ENCODE measurements at regions of chrX and their contacts with region 1.

Region 1: GRCh38 chrX:34227804-34228203 is 95.7 kb upstream of the FAM47A start:
- DNase-seq: no peak
- ATAC-seq: no peak
- H3K4me3 ChIP-seq: no peak overlapping the region
- H3K27ac ChIP-seq: no peak overlapping the region
- H3K4me1 ChIP-seq: no peaks in the 10 kb centered on the region
- H3K27me3 ChIP-seq: no peaks in the 10 kb centered on the region
- CTCF ChIP-seq: no peak

Region 2: DNA sequence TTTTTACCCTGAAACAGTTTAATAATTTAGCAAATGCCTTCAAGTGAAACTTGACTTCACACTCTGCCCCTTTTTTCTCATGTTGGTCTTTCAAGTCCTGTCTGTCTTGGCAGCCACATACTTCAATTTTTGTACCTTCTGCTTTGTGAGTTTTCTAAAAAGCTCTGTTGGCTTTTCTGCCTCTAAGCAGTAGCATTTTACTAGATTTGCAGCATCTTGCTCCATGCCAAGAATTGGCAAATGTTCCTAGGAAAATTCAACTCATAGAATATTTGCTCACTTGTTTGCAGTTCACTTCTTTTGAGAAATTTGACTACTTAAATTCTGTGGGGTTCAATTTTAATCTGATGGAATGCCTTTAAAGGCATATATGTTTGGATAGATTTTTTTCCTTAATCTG is 154.9 kb before region 1 on chrX:
- intact Hi-C with region 1: no loop called
- DNase-seq: no peak
- ATAC-seq: no peak
- H3K4me3 ChIP-seq: no peak overlapping the region
- H3K27ac ChIP-seq: no peak overlapping the region
- H3K4me1 ChIP-seq: no peaks in the 10 kb centered on the region
- H3K27me3 ChIP-seq: no peaks in the 10 kb centered on the region
- CTCF ChIP-seq: no peak

Region 3: DNA sequence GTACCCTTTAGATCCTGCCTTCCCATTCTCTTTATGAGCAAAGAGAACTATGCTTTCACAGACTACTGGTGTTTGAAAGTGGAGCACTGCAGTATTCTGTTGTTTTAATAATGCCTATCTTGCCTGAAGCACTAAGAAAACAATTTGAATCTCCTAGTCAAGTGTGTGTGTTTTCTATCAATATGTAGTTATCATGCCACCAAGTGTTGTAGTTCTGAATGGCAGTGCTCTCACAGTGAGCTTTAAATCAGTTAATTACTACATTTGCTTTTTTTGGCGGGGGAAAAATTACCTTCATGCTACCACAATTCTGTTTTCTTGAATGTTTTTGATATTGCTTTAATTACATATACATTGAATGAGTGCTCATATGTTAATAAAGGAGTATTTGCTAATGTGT is 47.9 kb after region 1 on chrX:
- intact Hi-C with region 1: loop called in 1 of 10 experiments (anchors 1 kb)
- DNase-seq: no peak
- ATAC-seq: no peak
- H3K4me3 ChIP-seq: no peak overlapping the region
- H3K27ac ChIP-seq: no peak overlapping the region
- H3K4me1 ChIP-seq: no peaks in the 10 kb centered on the region
- H3K27me3 ChIP-seq: no peaks in the 10 kb centered on the region
- CTCF ChIP-seq: no peak

Region 4: GRCh38 chrX:34642849-34643248 is 415.0 kb after region 1 on chrX:
- intact Hi-C with region 1: no loop called
- DNase-seq: no peak
- ATAC-seq: no peak
- H3K4me3 ChIP-seq: no peak overlapping the region
- H3K27ac ChIP-seq: no peak overlapping the region
- H3K4me1 ChIP-seq: peaks cover 0 to 79% (median 0%) of the 10 kb centered on the region in 9 donors
- H3K27me3 ChIP-seq: peaks cover 0 to 3% (median 0%) of the 10 kb centered on the region in 7 donors
- CTCF ChIP-seq: no peak

Measured in heart right ventricle (tissue), 16 donors.